B cell (primary cell): ENCODE measurements at regions of chr11 and their contacts with region 1.

Region 1: DNA sequence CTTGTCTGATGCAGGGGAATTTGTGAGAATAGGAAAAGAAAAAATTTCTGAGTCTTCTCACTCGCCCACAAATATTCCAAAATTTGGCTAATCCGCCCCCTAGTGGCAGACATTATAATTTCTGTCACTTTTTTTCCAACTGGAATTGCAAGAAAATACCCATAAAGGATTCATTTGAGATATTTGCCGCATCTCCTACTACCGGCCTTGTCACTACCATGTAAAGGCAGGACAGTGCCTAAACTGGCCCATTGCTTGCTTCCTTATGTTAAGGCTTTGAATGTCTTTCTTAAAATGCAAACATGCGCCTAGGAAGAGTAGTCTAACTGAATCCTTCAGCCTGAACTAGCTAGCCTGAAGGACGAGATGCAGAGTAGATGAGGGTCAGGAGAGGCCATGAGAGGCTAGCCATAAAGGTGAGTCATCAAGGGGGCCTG is 9.3 kb upstream of the CEP295 start:
- DNase-seq: peak; percentile 57
- ATAC-seq: no peak
- H3K4me3 ChIP-seq: no peak overlapping the region
- H3K4me3 Mint-ChIP-seq: no peak overlapping the region
- H3K27ac ChIP-seq: no peak overlapping the region
- H3K27ac Mint-ChIP-seq: no peak overlapping the region
- H3K4me1 ChIP-seq: no peaks in the 10 kb centered on the region
- H3K4me1 Mint-ChIP-seq: no peaks in the 10 kb centered on the region
- H3K27me3 ChIP-seq: peaks cover 0 to 7% (median 0%) of the 10 kb centered on the region in 4 experiments
- H3K27me3 Mint-ChIP-seq: peaks cover 40% of the 10 kb centered on the region
- CTCF ChIP-seq: peak; percentile 92

Region 2: GRCh38 chr11:93225662-93226061 is 426.5 kb before region 1 on chr11:
- CTCF ChIA-PET with region 1: interaction called, 12 read pairs
- POLR2A ChIA-PET with region 1: no interaction called
- intact Hi-C with region 1: no loop called
- DNase-seq: peak; percentile 41
- ATAC-seq: no peak
- H3K4me3 ChIP-seq: no peak overlapping the region
- H3K4me3 Mint-ChIP-seq: no peak overlapping the region
- H3K27ac ChIP-seq: no peak overlapping the region
- H3K27ac Mint-ChIP-seq: no peak overlapping the region
- H3K4me1 ChIP-seq: no peaks in the 10 kb centered on the region
- H3K4me1 Mint-ChIP-seq: no peaks in the 10 kb centered on the region
- H3K27me3 ChIP-seq: peaks cover 0 to 3% (median 0%) of the 10 kb centered on the region in 4 experiments
- H3K27me3 Mint-ChIP-seq: peaks cover 3% of the 10 kb centered on the region
- CTCF ChIP-seq: peak; percentile 62

Region 3: GRCh38 chr11:93234602-93235207 is 417.5 kb before region 1 on chr11:
- CTCF ChIA-PET with region 1: interaction called, 61 read pairs
- POLR2A ChIA-PET with region 1: no interaction called
- intact Hi-C with region 1: loop called (anchors 1 kb)
- DNase-seq: peak; percentile 69
- ATAC-seq: peak; percentile 92
- H3K4me3 ChIP-seq: no peak overlapping the region
- H3K4me3 Mint-ChIP-seq: no peak overlapping the region
- H3K27ac ChIP-seq: no peak overlapping the region
- H3K27ac Mint-ChIP-seq: no peak overlapping the region
- H3K4me1 ChIP-seq: no peaks in the 10 kb centered on the region
- H3K4me1 Mint-ChIP-seq: no peaks in the 10 kb centered on the region
- H3K27me3 ChIP-seq: peaks cover 0 to 5% (median 2%) of the 10 kb centered on the region in 4 experiments
- H3K27me3 Mint-ChIP-seq: peaks cover 27% of the 10 kb centered on the region
- CTCF ChIP-seq: peak; percentile 87

Region 4: DNA sequence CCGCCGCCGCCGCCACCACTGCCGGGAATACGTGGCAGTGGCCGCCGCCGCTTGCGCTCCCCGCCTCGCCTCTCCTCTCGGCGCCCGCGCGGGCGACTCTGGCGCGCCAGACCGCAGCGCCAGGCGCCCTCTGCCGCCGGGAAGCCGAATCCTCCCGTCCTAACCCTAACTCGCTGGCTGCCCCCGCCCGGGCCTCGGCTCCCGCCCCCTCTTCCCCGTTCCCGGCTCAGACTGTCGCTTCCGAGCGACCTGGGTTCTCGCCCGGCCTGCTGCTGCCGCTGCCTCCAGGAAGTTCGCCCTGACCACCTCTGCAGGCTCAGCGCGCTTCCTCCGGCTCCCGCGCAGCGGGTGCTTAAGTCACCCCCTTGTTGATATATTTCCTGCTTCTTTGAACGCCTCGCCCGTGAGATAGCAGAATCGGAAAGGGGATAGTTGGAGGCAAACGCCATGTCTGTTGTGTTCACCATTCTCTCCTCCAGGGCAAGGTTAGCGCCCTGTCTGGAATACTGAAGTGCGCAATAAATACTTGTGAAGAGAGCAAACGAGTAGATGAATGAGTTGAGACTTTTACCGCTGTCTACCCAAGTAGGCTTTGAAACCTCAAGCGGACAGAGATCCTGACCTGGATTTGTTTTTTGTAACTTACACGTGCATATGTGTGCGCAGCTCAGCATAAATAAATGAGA is 108.7 kb before region 1 on chr11 and contains the start of gene SMCO4:
- CTCF ChIA-PET with region 1: no interaction called
- POLR2A ChIA-PET with region 1: no interaction called
- intact Hi-C with region 1: loop called (anchors 5 kb)
- DNase-seq: peak; percentile 80
- ATAC-seq: peak; percentile 85
- H3K4me3 ChIP-seq: peak within 1 kb of the TSS; percentile 21 to 87 (median 62)
- H3K4me3 Mint-ChIP-seq: peak within 1 kb of the TSS; percentile 90
- H3K27ac ChIP-seq: peak within 1 kb of the TSS in 1 of 2 donors; percentile 15
- H3K27ac Mint-ChIP-seq: peak within 1 kb of the TSS; percentile 83
- H3K4me1 ChIP-seq: peaks cover 8 to 14% of the 10 kb centered on the region in 2 donors
- H3K4me1 Mint-ChIP-seq: peaks cover 17% of the 10 kb centered on the region
- H3K27me3 ChIP-seq: peaks cover 0 to 7% (median 0%) of the 10 kb centered on the region in 4 experiments
- H3K27me3 Mint-ChIP-seq: peaks cover 19% of the 10 kb centered on the region
- CTCF ChIP-seq: peak; percentile 65
- total RNA-seq, gene SMCO4: 2.0 and 3.6 TPM in 2 replicates

Region 5: GRCh38 chr11:93668171-93668570 is 16.0 kb after region 1 on chr11:
- CTCF ChIA-PET with region 1: interaction called, 10 read pairs
- POLR2A ChIA-PET with region 1: no interaction called
- intact Hi-C with region 1: no loop called
- DNase-seq: no peak
- ATAC-seq: no peak
- H3K4me3 ChIP-seq: no peak overlapping the region
- H3K4me3 Mint-ChIP-seq: no peak overlapping the region
- H3K27ac ChIP-seq: no peak overlapping the region
- H3K27ac Mint-ChIP-seq: no peak overlapping the region
- H3K4me1 ChIP-seq: no peaks in the 10 kb centered on the region
- H3K4me1 Mint-ChIP-seq: peaks cover 2% of the 10 kb centered on the region
- H3K27me3 ChIP-seq: no peaks in the 10 kb centered on the region
- H3K27me3 Mint-ChIP-seq: no peaks in the 10 kb centered on the region
- CTCF ChIP-seq: no peak

Region 6: DNA sequence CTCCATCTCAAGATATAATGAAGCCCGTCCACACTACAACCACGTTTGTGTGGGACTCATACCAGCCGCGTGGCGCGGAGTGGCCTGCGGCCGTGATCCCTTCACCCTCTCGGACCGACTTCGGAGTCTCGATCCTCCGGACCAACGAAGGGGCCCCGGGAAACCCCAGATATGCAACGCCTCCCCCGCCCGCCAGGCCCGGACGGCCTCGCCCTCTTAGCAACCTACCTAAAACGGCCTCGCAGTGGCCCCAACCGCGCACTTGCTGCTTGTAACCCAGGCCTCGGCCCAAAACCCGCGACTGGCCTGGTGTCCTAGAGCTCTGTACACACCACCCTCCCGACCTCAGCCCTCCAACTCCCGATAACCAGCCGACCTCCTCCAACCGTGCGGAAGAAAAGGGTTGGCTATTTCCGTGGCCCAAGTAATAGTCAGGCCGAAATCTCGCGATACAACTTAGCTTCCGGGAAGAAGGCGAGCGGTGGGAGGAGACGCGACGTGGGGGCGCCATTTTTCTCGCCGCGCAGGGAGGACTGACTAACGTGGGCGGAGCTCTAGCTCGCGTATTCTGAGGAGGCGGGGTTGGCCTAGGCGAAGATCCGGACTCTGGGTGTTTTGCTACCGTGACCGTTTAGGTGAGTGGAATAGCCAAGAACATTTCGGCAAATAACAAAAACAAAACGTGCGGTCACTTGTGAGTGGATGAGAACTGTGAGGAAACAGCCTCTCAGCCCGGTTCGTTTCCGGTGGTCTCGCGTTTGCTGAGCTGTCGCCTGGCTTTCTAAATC is 89.1 kb after region 1 on chr11 and contains the starts of genes C11orf54 and TAF1D:
- CTCF ChIA-PET with region 1: interaction called, 21 read pairs
- POLR2A ChIA-PET with region 1: interaction called, 9 read pairs
- intact Hi-C with region 1: no loop called
- DNase-seq: peak; percentile 99
- ATAC-seq: peak; percentile 95
- H3K4me3 ChIP-seq: peak within 1 kb of the TSS; percentile 73 to 98 (median 92)
- H3K4me3 Mint-ChIP-seq: peak within 1 kb of the TSS; percentile 98
- H3K27ac ChIP-seq: peak within 1 kb of the TSS; percentile 90 to 96
- H3K27ac Mint-ChIP-seq: peak within 1 kb of the TSS; percentile 98
- H3K4me1 ChIP-seq: peaks cover 36 to 39% of the 10 kb centered on the region in 2 donors
- H3K4me1 Mint-ChIP-seq: peaks cover 63% of the 10 kb centered on the region
- H3K27me3 ChIP-seq: no peaks in the 10 kb centered on the region
- H3K27me3 Mint-ChIP-seq: no peaks in the 10 kb centered on the region
- CTCF ChIP-seq: no peak
- total RNA-seq, gene C11orf54: 38.9 and 40.3 TPM in 2 replicates
- total RNA-seq, gene TAF1D: 230 and 235 TPM in 2 replicates